ENCODE measurements at regions of chr9 and their contacts with region 1.

Region 1: DNA sequence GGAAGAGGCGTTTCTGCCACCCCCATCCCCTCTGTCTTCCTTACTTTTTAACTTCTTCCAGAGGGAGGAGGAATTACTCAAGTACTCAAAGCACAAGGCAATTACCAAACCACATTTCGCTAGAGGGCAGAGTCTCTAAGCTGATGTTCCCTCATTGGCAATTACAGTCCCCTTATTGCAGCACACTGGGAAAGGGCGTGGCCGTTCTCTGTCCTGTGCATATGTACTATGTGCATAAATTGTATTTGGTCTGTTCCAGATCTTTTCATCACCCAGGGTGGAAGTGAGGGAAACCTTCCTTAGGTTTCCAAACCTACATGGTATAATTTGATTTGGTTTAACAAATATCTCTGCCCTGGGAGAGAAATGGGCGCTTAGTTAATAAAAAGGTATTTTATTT is 29.8 kb upstream of the ALDOB start:
- DNase-seq: peak in 6 of 7 donors; percentile 22 to 60 (median 41)
- H3K4me3 ChIP-seq: no peak overlapping the region
- H3K27ac ChIP-seq: no peak overlapping the region
- H3K4me1 ChIP-seq: no peaks in the 10 kb centered on the region
- H3K27me3 ChIP-seq: no peaks in the 10 kb centered on the region
- CTCF ChIP-seq: peak; percentile 17 to 52 (median 44)
- POLR2A ChIP-seq: no peak

Region 2: DNA sequence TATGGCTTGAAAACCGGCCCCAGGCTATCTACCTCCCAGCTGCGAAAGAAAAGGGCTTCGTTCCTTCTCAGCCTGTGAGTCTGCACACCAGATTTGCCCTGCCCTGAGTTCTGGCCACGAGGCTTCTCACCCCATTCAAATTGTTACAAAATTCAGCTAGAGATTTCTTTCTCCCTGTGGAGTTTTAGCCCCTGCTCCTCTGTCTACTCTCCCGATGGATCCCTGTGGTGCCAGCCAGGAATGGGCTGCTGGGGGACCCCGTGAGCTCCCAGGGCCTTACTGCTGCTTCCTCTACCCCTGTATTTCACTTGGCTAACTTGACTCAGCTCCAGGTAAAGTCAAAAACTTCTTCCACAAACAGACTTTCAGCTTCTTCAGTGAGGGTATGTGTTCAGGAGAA is 59.0 kb after region 1 on chr9:
- intact Hi-C with region 1: loop called in 1 of 2 experiments (anchors 5 kb)
- DNase-seq: no peak
- H3K4me3 ChIP-seq: no peak overlapping the region
- H3K27ac ChIP-seq: no peak overlapping the region
- H3K4me1 ChIP-seq: no peaks in the 10 kb centered on the region
- H3K27me3 ChIP-seq: no peaks in the 10 kb centered on the region
- CTCF ChIP-seq: no peak
- POLR2A ChIP-seq: no peak

Region 3: GRCh38 chr9:101664453-101664852 is 199.1 kb after region 1 on chr9:
- intact Hi-C with region 1: no loop called
- DNase-seq: no peak
- H3K4me3 ChIP-seq: no peak overlapping the region
- H3K27ac ChIP-seq: no peak overlapping the region
- H3K4me1 ChIP-seq: no peaks in the 10 kb centered on the region
- H3K27me3 ChIP-seq: no peaks in the 10 kb centered on the region
- CTCF ChIP-seq: no peak
- POLR2A ChIP-seq: no peak

Measured in adrenal gland (tissue), 19 donors.